Heart left ventricle (tissue), 16 donors: ENCODE measurements at regions of chr16 and their contacts with region 1.

Region 1: DNA sequence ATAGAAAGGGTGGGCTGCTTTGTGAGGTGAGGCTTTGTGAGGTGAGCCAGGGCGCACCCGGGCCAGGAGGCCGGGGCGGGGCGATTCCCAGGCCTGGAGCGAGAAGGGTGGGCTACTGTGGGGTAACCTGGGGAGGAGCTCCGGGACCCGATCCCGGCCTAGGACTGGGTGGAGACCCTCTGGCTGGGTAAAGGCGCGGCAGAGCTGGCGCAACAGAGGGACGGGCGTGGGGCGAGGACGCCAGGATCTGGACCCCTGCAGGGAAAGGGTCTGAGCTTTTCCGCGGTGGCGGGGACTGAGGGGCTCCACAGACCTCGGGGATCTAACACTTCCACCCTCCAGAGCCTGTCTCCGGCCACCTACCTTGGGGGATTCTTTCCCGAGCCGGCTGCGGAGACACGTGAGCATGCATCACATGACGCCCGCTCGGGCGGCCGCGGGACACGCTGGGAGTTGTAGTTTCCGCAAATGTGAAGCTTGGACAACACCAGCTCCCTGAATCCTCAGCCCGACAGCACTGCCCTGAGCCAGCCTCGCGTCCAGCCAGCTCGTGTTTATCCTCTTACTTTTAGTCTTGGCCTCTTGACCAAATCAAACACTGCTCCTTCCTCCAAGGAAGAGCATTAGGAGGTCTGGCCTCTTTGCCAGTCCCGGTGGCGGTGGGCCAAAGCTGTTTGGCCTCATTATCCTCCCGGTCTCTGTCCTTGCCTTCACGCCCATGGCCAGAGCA is at the start of gene SLC38A7:
- DNase-seq: peak; percentile 88 to 95 (median 93)
- ATAC-seq: peak; percentile 88 to 94 (median 92)
- H3K4me3 ChIP-seq: peak within 1 kb of the TSS; percentile 62 to 99 (median 84)
- H3K27ac ChIP-seq: peak within 1 kb of the TSS; percentile 49 to 95 (median 91)
- H3K4me1 ChIP-seq: peaks cover 0 to 33% (median 17%) of the 10 kb centered on the region in 12 donors
- H3K27me3 ChIP-seq: no peaks in the 10 kb centered on the region
- CTCF ChIP-seq: no peak
- POLR2A ChIP-seq: peak in 1 of 2 donors; percentile 59
- total RNA-seq, gene SLC38A7: 18.4 to 38.8 (median 32.4) TPM

Region 2: GRCh38 chr16:58629572-58630104 is 54.9 kb before region 1 on chr16 and contains the start of gene CNOT1:
- intact Hi-C with region 1: loop called in 1 of 10 experiments (anchors 2 kb)
- DNase-seq: peak; percentile 98 to 99 (median 98)
- ATAC-seq: peak; percentile 93 to 96 (median 96)
- H3K4me3 ChIP-seq: peak within 1 kb of the TSS; percentile 66 to 99 (median 88)
- H3K27ac ChIP-seq: peak within 1 kb of the TSS; percentile 95 to 100 (median 98)
- H3K4me1 ChIP-seq: peaks cover 0 to 38% (median 23%) of the 10 kb centered on the region in 12 donors
- H3K27me3 ChIP-seq: no peaks in the 10 kb centered on the region
- CTCF ChIP-seq: no peak
- POLR2A ChIP-seq: peak in 1 of 2 donors; percentile 81
- total RNA-seq, gene CNOT1: 66.6 to 110 (median 82.5) TPM

Region 3: DNA sequence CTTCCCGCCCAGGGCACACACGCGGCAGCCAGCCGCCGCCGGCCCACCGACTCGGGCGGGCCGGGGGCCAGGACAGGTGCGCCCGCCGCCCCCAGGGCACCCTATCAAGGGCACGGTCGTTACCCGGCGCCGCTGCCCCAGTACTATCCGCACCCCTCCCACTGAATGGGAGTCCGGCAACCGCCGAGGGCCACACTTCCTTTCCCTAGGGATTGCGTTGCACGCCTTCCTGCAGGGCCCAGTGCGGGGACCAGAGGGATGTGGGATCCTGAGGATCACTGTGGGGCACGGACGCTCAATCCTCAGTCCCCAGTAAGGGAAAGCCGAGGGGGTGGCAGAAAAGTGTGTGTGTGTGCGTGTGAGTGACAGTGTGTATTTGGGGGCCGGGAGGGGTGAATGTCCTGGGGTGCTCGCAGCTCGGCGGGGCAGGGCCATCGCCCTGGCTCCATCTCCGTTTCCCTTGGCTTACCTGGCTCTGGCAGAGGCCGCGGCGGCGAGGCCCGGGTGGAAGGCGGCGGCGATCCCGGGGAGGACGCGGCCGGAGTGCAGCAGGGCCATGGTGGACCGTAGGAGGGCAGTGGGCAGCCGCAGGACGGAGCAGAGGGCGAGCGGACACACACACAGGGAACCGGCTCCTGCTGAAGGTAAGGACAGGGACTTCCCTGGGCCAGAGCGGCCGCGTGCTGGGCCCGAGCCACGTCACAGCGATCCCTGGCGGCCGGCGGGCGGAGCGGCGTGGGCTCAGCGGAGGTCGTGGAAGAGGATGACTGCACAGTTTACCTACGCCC is 49.3 kb after region 1 on chr16 and contains the start of gene GOT2:
- intact Hi-C with region 1: loop called in 4 of 10 experiments (anchors 1 to 5 kb)
- DNase-seq: peak; percentile 80 to 92 (median 84)
- ATAC-seq: peak; percentile 90 to 98 (median 96)
- H3K4me3 ChIP-seq: peak within 1 kb of the TSS; percentile 40 to 99 (median 88)
- H3K27ac ChIP-seq: peak within 1 kb of the TSS; percentile 74 to 94 (median 87)
- H3K4me1 ChIP-seq: peaks cover 6 to 47% (median 22%) of the 10 kb centered on the region in 12 donors
- H3K27me3 ChIP-seq: no peaks in the 10 kb centered on the region
- CTCF ChIP-seq: peak; percentile 77 to 98 (median 92)
- POLR2A ChIP-seq: peak in 1 of 2 donors; percentile 22
- total RNA-seq, gene GOT2: 297 to 590 (median 453) TPM

Region 4: GRCh38 chr16:58755989-58756649 is 71.6 kb after region 1 on chr16:
- intact Hi-C with region 1: loop called in 8 of 10 experiments (anchors 1 to 5 kb)
- DNase-seq: peak; percentile 57 to 75 (median 69)
- ATAC-seq: peak; percentile 84 to 96 (median 91)
- H3K4me3 ChIP-seq: peak overlapping the region in 1 of 12 donors; percentile 11
- H3K27ac ChIP-seq: peak overlapping the region in 1 of 12 donors; percentile 28
- H3K4me1 ChIP-seq: peaks cover 0 to 9% (median 0%) of the 10 kb centered on the region in 12 donors
- H3K27me3 ChIP-seq: no peaks in the 10 kb centered on the region
- CTCF ChIP-seq: peak in 11 of 12 donors; percentile 49 to 79 (median 64)
- POLR2A ChIP-seq: no peak

Region 5: DNA sequence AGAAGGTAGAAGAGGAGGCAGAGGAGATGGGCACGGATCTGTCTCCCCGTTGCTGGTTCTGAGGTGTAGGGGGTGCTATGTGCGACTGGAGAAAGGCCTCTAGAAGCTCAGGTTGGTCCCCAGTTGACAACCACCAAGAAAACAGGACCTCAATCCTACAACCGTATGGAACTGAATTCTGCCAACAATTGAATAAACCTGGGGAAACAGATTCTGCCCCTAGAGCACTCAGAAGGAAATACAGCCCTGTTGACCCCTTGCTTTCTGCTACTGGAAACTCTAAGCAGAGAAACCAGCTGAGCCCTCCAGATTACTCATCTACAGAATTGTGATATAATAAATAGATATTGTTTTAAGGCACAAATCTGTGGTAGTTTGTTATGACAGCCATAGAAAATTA is 362.6 kb after region 1 on chr16:
- intact Hi-C with region 1: no loop called
- DNase-seq: no peak
- ATAC-seq: no peak
- H3K4me3 ChIP-seq: no peak overlapping the region
- H3K27ac ChIP-seq: no peak overlapping the region
- H3K4me1 ChIP-seq: no peaks in the 10 kb centered on the region
- H3K27me3 ChIP-seq: no peaks in the 10 kb centered on the region
- CTCF ChIP-seq: no peak
- POLR2A ChIP-seq: no peak